HEK293 (cell line): ENCODE measurements at regions of chr13 and their contacts with region 1.

Region 1: DNA sequence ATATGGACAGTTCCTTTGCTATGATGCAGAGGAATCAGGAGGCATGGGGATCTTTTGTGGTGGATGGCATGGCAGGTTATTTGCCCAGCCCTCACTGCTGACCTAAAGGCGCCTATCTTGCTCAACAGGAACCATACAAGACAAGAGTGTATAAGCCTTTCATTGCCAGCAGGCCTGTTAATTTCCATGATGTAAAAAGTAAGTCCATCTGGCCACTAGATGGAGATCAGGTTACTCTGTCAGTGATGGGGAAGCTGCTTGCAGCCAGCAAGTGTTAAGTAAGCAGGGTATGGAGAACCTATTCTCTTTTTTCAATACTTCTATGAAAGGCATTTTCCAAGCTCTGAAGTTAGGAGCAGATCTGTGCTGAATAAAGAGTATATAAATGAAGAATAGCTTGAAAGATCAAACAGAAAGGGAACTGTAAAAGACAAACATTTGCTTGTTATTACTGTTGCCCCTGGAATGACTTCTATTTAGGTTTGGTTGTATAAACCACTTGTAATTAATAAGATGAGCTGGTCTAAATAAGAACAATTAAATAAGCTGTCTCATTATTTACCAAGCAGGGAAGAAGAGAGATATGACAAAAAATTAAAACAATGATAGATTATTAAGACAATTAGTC is 210.9 kb downstream of the RGCC start:
- H3K4me3 ChIP-seq: no peak overlapping the region
- H3K27ac ChIP-seq: no peak overlapping the region
- H3K4me1 ChIP-seq: no peaks in the 10 kb centered on the region
- CTCF ChIP-seq: no peak

Region 2: DNA sequence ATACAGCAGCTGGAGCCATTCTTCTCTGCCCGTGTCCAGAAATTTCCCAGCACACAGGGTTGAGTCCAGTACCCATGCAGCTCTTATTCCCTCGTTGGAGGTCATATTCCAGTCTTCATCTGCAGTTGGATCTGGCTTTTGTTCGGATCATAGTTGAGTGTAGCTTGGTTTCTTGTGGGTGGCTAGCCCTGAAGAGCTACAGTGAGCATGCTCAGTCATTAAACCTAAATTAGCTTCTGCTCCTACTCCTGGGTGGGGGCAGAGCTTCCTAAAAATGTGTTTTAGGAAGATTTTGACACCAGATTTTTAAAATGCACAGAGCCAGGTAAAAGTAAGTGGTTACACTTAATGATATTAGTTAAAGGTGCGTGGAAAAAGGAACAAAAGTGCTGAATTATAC is 444.6 kb after region 1 on chr13:
- CTCF ChIA-PET with region 1: interaction called, 13 read pairs
- POLR2A ChIA-PET with region 1: no interaction called
- H3K4me3 ChIP-seq: no peak overlapping the region
- H3K27ac ChIP-seq: no peak overlapping the region
- H3K4me1 ChIP-seq: peaks cover 13% of the 10 kb centered on the region; the same call in 1 of the 2 replicates
- CTCF ChIP-seq: no peak

Region 3: GRCh38 chr13:42405665-42406390 is 737.6 kb after region 1 on chr13:
- CTCF ChIA-PET with region 1: no interaction called
- POLR2A ChIA-PET with region 1: no interaction called
- H3K4me3 ChIP-seq: no peak overlapping the region
- H3K27ac ChIP-seq: no peak overlapping the region
- H3K4me1 ChIP-seq: no peaks in the 10 kb centered on the region
- CTCF ChIP-seq: no peak